ENCODE measurements at regions of chr15 and their contacts with region 1.

Region 1: GRCh38 chr15:85618956-85619491 is 175.7 kb downstream of the KLHL25 start:
- DNase-seq: peak; percentile 78
- H3K4me3 Mint-ChIP-seq: no peak overlapping the region
- H3K27ac Mint-ChIP-seq: no peak overlapping the region
- H3K4me1 Mint-ChIP-seq: peaks cover 30% of the 10 kb centered on the region
- H3K27me3 Mint-ChIP-seq: no peaks in the 10 kb centered on the region

Region 2: GRCh38 chr15:85543741-85544155 is 75.3 kb before region 1 on chr15:
- CTCF ChIA-PET with region 1: interaction called, 4 read pairs
- intact Hi-C with region 1: loop called (anchors 2 kb)
- DNase-seq: peak; percentile 62
- H3K4me3 Mint-ChIP-seq: peak overlapping the region; percentile 52
- H3K27ac Mint-ChIP-seq: peak overlapping the region; percentile 62
- H3K4me1 Mint-ChIP-seq: peaks cover 74% of the 10 kb centered on the region
- H3K27me3 Mint-ChIP-seq: no peaks in the 10 kb centered on the region

Region 3: GRCh38 chr15:85667491-85668424 is 48.7 kb after region 1 on chr15:
- CTCF ChIA-PET with region 1: interaction called, 3 read pairs
- intact Hi-C with region 1: loop called (anchors 1 kb)
- DNase-seq: peak; percentile 78
- H3K4me3 Mint-ChIP-seq: no peak overlapping the region
- H3K27ac Mint-ChIP-seq: peak overlapping the region; percentile 93
- H3K4me1 Mint-ChIP-seq: peaks cover 26% of the 10 kb centered on the region
- H3K27me3 Mint-ChIP-seq: no peaks in the 10 kb centered on the region

Region 4: GRCh38 chr15:85707519-85708338 is 88.7 kb after region 1 on chr15:
- CTCF ChIA-PET with region 1: no interaction called
- intact Hi-C with region 1: loop called (anchors 1 kb)
- DNase-seq: peak; percentile 51
- H3K4me3 Mint-ChIP-seq: peak overlapping the region; percentile 79
- H3K27ac Mint-ChIP-seq: peak overlapping the region; percentile 99
- H3K4me1 Mint-ChIP-seq: peaks cover 87% of the 10 kb centered on the region
- H3K27me3 Mint-ChIP-seq: no peaks in the 10 kb centered on the region

Region 5: GRCh38 chr15:85794603-85795336 is 175.7 kb after region 1 on chr15 and contains the start of gene KLHL25:
- CTCF ChIA-PET with region 1: no interaction called
- intact Hi-C with region 1: loop called (anchors 5 kb)
- DNase-seq: peak; percentile 94
- H3K4me3 Mint-ChIP-seq: peak within 1 kb of the TSS; percentile 86
- H3K27ac Mint-ChIP-seq: peak within 1 kb of the TSS; percentile 50
- H3K4me1 Mint-ChIP-seq: peaks cover 34% of the 10 kb centered on the region
- H3K27me3 Mint-ChIP-seq: no peaks in the 10 kb centered on the region
- total RNA-seq, gene KLHL25: 5.3 to 5.4 TPM

Measured in activated naive CD4-positive, alpha-beta T cell treated with anti-CD3 and anti-CD28 coated beads for 36 hours (primary cell).